Colonic mucosa (tissue), 4 donors: ENCODE measurements at regions of chr2 and their contacts with region 1.

Region 1: GRCh38 chr2:235493775-235494715 is at the start of gene AGAP1:
- DNase-seq: peak; percentile 90
- H3K4me3 ChIP-seq: peak within 1 kb of the TSS; percentile 54
- H3K27ac ChIP-seq: peak within 1 kb of the TSS; percentile 44
- H3K4me1 ChIP-seq: peaks cover 4% of the 10 kb centered on the region
- H3K27me3 ChIP-seq: no peaks in the 10 kb centered on the region
- CTCF ChIP-seq: no peak
- total RNA-seq, gene AGAP1: 62.1 to 62.9 TPM

Region 2: DNA sequence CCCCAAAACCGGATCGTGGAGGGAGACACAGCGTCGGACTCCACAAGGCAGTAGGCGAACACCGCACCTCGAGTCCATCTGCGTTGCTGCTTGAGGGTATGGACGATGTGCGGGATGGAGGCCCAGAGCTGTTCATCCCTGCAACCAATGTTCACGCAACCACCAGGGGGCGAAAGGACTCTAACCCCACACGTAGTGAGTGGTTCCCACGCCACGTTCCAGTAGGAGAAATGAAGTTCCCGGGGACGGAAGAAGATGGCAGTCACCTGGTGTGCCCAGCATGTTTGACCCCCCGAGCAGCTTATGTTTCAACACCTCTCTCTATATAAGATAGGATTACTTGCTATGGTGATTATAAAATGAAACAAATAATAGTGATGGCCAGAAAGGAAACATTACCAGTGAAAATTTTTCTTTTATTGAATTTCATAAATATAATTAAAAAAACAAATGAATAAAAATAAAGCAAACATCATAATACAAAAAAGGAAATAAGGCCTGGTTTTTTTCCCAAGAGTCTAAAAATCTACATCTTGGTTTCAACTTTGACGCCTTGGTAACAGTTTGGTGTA is 358.0 kb before region 1 on chr2:
- intact Hi-C with region 1: loop called (anchors 10 kb)
- DNase-seq: peak; percentile 90
- H3K4me3 ChIP-seq: no peak overlapping the region
- H3K27ac ChIP-seq: no peak overlapping the region
- H3K4me1 ChIP-seq: no peaks in the 10 kb centered on the region
- H3K27me3 ChIP-seq: no peaks in the 10 kb centered on the region
- CTCF ChIP-seq: peak; percentile 75

Region 3: DNA sequence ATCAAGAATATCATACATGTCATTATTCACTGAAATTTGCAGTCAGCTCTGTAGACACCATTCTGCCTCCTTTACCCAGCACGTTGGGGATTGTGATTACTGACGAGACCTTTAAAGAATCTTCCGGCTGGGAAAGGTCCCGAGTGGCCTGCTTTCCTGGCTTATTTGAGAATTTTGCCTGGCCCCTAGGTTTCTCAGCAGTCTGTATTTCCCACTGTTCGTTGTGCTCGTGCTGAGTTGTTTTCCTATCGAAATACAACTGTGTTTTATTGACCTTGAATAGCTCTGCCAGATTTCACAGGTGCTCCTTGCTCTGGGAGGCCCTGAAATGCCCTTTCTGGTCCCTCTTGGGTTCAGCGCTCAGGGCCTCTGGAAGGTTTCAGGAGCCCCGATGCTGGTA is 94.7 kb after region 1 on chr2:
- intact Hi-C with region 1: loop called (anchors 5 kb)
- DNase-seq: no peak
- H3K4me3 ChIP-seq: no peak overlapping the region
- H3K27ac ChIP-seq: no peak overlapping the region
- H3K4me1 ChIP-seq: no peaks in the 10 kb centered on the region
- H3K27me3 ChIP-seq: no peaks in the 10 kb centered on the region
- CTCF ChIP-seq: no peak

Region 4: GRCh38 chr2:235669983-235670962 is 176.2 kb after region 1 on chr2:
- intact Hi-C with region 1: loop called (anchors 5 kb)
- DNase-seq: peak; percentile 59
- H3K4me3 ChIP-seq: peak overlapping the region; percentile 41
- H3K27ac ChIP-seq: no peak overlapping the region
- H3K4me1 ChIP-seq: no peaks in the 10 kb centered on the region
- H3K27me3 ChIP-seq: no peaks in the 10 kb centered on the region
- CTCF ChIP-seq: peak; percentile 31

Region 5: GRCh38 chr2:235746257-235747084 is 252.4 kb after region 1 on chr2:
- intact Hi-C with region 1: loop called (anchors 10 kb)
- DNase-seq: peak; percentile 72
- H3K4me3 ChIP-seq: no peak overlapping the region
- H3K27ac ChIP-seq: no peak overlapping the region
- H3K4me1 ChIP-seq: no peaks in the 10 kb centered on the region
- H3K27me3 ChIP-seq: no peaks in the 10 kb centered on the region
- CTCF ChIP-seq: peak; percentile 69

Region 6: DNA sequence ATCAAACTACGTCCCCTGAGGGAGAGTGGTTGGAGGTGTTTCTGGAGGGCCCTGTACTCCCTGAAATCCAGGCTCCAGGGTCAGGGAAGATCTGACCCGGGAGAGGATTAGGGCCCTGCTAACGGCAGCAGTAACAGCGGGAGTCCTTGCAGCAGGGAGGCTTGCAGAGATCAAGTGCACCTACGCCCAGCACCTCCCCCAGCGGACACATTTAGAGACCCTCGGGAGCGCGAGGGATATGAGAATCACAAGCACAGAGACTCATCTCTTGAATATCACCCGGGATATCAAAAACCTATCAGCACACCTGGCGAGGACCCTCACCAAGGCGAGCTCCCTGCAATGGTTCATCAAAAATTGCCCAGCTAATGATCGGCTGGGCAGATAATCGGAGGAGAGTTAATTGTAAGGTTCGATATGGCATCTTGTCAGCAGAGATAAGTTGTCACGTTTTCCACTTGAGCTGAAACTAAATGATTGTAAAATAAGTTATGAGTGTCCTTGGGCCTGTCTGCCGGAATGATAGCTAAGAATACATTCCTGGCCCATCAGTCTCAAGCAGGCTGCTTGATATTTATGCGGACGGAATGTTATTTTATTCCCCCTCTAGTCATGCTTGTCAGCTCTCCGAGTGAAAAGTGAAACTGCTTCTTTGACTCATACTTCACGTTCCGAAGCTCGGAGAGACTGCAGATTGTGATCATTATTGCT is 464.3 kb after region 1 on chr2:
- intact Hi-C with region 1: no loop called
- DNase-seq: no peak
- H3K4me3 ChIP-seq: no peak overlapping the region
- H3K27ac ChIP-seq: no peak overlapping the region
- H3K4me1 ChIP-seq: no peaks in the 10 kb centered on the region
- H3K27me3 ChIP-seq: no peaks in the 10 kb centered on the region
- CTCF ChIP-seq: no peak